Stomach (tissue), 19 donors: ENCODE measurements at regions of chr21 and their contacts with region 1.

Region 1: DNA sequence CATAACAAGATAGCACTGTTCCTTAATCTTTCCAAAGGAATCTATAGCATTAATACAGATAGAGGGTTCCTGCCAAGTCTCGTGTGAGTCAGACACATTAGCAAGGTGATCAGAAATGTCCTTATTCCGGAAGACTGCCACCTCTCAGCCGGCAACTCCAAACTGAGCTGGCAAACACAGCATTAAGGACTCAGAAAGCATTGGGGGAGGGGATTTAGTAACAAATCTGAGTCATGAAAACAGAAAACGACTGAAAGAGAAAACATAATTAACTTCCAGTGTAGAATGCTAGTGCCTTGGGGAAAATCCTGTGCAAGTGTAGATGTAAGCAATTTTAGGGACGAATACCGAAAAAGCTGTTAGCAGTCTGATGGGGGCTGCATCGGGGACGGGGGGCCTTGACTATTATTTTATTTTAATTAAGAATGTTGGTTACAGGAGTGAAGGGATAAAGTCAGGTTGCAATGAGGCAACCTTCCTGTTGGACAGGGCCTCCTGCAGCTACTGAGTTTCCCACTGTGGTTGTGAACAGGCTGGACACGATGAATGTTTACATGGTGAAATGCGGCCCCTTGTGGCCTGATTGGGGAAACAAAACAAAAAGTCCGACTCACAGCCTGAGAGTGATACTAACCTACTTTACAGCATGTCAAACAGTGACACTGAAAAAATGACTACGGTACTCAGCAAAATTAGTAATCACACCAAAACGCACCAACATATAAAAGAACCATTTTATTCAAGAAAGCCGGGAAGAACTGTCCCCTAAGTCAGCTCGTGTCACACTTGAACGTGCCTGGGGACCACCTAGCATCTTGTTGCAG is 20.7 kb downstream of the MIS18A start:
- DNase-seq: peak; percentile 73 to 93
- H3K4me3 ChIP-seq: no peak overlapping the region
- H3K27ac ChIP-seq: no peak overlapping the region
- H3K4me1 ChIP-seq: peaks cover 4 to 33% (median 22%) of the 10 kb centered on the region in 4 donors
- H3K27me3 ChIP-seq: no peaks in the 10 kb centered on the region
- CTCF ChIP-seq: peak in 5 of 7 experiments; percentile 47 to 79 (median 66)
- EP300 ChIP-seq: no peak
- POLR2A ChIP-seq: no peak

Region 2: DNA sequence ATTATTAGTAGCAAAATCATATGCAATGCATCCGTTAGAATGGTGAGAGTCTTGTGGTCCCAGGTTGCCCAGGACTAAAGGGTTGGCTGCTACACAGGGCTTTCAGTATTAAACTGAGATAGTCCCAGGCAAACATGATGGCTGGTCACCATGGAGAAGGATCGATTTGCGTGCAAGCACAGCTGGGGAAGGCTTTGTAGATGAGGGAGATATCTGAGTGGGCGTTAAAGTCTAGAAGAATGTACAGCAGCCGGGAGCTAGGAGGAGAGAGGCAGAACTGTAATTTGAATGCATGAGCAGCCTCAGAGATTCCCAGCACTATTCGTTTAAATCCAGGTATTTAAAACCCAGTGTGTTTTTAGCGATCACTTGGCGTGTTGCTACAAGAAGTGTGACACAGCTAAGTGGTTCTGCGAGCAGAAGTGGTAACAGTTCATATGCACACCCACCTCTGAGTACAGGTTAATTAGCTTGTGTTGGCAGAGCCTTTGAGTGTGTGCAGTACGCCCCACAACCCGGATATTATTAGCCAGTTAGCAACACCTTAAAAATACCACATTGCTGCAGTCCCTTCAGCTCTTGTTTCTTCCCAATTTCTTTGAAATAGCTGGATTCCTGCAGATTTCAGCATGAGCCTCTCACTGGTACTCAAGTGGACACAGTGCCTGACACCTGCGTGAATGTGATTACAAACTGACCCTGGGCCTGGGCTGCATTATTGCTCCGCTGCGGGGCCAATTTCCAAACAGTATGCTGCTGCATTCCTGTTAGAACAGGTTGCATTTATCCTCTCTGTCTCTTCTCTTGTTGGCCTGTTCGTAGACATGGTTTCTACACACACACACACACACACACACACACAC is 459.1 kb before region 1 on chr21:
- intact Hi-C with region 1: loop called (anchors 10 kb)
- DNase-seq: peak in 1 of 2 donors; percentile 24
- H3K4me3 ChIP-seq: no peak overlapping the region
- H3K27ac ChIP-seq: no peak overlapping the region
- H3K4me1 ChIP-seq: no peaks in the 10 kb centered on the region
- H3K27me3 ChIP-seq: peaks cover 0 to 33% (median 5%) of the 10 kb centered on the region in 3 donors
- CTCF ChIP-seq: no peak
- EP300 ChIP-seq: no peak
- POLR2A ChIP-seq: no peak

Region 3: GRCh38 chr21:31862078-31862477 is 396.1 kb before region 1 on chr21:
- intact Hi-C with region 1: loop called (anchors 5 kb)
- DNase-seq: no peak
- H3K4me3 ChIP-seq: no peak overlapping the region
- H3K27ac ChIP-seq: no peak overlapping the region
- H3K4me1 ChIP-seq: peaks cover 0 to 12% (median 5%) of the 10 kb centered on the region in 4 donors
- H3K27me3 ChIP-seq: peaks cover 0 to 9% (median 0%) of the 10 kb centered on the region in 3 donors
- CTCF ChIP-seq: no peak
- EP300 ChIP-seq: no peak
- POLR2A ChIP-seq: no peak